Colonic mucosa (tissue), 4 donors: ENCODE measurements at regions of chr1 and their contacts with region 1.

Region 1: DNA sequence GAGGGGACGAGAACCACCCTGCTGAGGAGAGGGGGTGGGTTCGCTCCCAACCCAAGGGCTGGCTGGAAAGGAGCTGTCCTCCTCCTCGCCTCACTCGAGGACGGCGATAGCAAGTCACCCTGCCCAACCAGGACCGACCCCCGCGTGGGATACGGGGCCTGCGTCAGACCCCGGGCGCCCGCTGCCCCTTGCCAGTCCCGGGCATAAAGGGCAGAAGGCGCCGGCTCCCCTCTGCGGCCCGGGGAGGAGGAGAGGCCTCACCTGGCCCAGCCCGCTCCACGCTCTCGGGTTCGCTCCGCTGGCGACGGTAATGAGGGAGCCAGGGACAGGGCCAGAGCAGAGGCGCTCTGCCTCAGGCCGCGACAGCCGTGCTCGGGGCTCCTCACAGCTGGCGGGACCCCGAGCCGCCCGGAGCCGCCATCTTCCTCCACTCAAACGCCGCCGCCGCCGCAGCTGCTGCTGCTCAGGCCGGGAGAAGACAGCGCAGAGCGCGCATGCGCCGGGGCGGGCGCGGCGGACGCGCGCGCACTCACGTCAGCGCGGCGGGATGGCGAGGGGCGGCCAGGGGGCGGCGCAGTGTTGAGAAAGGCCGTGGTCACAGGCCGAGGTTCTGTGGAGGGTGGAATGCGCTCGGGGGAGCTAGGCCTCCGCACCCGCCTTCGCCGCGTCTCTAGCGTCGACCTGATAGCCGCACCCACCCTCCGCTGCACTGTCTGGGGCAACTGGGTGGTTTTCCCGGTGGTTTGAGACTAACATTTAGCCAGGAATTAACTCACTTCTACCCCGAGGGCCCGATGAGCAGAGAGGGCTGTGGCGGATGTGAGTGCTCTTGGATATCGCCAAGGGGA is at the start of gene FBXO42:
- DNase-seq: peak; percentile 91
- H3K4me3 ChIP-seq: peak within 1 kb of the TSS; percentile 93
- H3K27ac ChIP-seq: peak within 1 kb of the TSS; percentile 85
- H3K4me1 ChIP-seq: peaks cover 4% of the 10 kb centered on the region
- H3K27me3 ChIP-seq: no peaks in the 10 kb centered on the region
- CTCF ChIP-seq: peak; percentile 46
- total RNA-seq, gene FBXO42: 15.0 to 17.8 TPM

Region 2: GRCh38 chr1:16249596-16250241 is 102.5 kb before region 1 on chr1:
- intact Hi-C with region 1: loop called (anchors 10 kb)
- DNase-seq: no peak
- H3K4me3 ChIP-seq: no peak overlapping the region
- H3K27ac ChIP-seq: no peak overlapping the region
- H3K4me1 ChIP-seq: peaks cover 25% of the 10 kb centered on the region
- H3K27me3 ChIP-seq: no peaks in the 10 kb centered on the region
- CTCF ChIP-seq: no peak